ENCODE measurements at regions of chr17 and their contacts with region 1.

Region 1: GRCh38 chr17:69523244-69523861 is 108.9 kb downstream of the MAP2K6 start:
- DNase-seq: no peak
- H3K4me3 ChIP-seq: no peak overlapping the region
- H3K27ac ChIP-seq: no peak overlapping the region
- H3K4me1 ChIP-seq: peaks cover 0 to 8% (median 0%) of the 10 kb centered on the region in 4 donors
- H3K27me3 ChIP-seq: no peaks in the 10 kb centered on the region
- CTCF ChIP-seq: peak; percentile 55 to 81 (median 68)
- EP300 ChIP-seq: no peak
- POLR2A ChIP-seq: no peak

Region 2: GRCh38 chr17:69327060-69327831 is 196.1 kb before region 1 on chr17 and contains the start of gene ABCA5:
- in situ Hi-C with region 1: loop called in 2 of 4 experiments (anchors 10 to 25 kb)
- intact Hi-C with region 1: loop called (anchors 10 kb)
- DNase-seq: peak; percentile 93
- H3K4me3 ChIP-seq: peak within 1 kb of the TSS; percentile 63 to 81 (median 70)
- H3K27ac ChIP-seq: peak within 1 kb of the TSS; percentile 88 to 96 (median 91)
- H3K4me1 ChIP-seq: peaks cover 0 to 19% (median 5%) of the 10 kb centered on the region in 4 donors
- H3K27me3 ChIP-seq: no peaks in the 10 kb centered on the region
- CTCF ChIP-seq: no peak
- EP300 ChIP-seq: no peak
- POLR2A ChIP-seq: peak; percentile 66
- total RNA-seq, gene ABCA5: 17.3 to 173 (median 125) TPM

Region 3: DNA sequence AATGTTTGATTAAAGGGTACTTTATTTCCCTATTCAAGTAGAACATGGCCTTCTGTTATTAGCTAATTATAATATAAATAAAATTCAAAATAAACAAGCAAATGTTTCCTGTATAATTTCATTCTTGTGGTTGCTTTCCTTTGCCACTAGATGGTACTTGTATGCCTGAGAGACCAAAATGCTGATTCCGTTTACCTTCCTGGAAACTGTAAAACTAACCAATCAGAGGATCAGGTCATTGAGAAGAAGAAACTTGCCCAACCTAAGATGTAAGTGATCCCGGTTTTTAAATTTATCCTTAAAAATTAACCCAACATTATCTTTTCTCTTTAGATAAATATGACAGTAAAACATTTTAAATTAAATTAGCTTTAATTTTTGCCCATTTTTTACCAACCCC is 188.3 kb before region 1 on chr17:
- in situ Hi-C with region 1: loop called in 3 of 4 experiments (anchors 5 to 25 kb)
- intact Hi-C with region 1: no loop called
- DNase-seq: no peak
- H3K4me3 ChIP-seq: no peak overlapping the region
- H3K27ac ChIP-seq: no peak overlapping the region
- H3K4me1 ChIP-seq: peaks cover 0 to 6% (median 0%) of the 10 kb centered on the region in 4 donors
- H3K27me3 ChIP-seq: no peaks in the 10 kb centered on the region
- CTCF ChIP-seq: peak; percentile 46 to 68 (median 49)
- EP300 ChIP-seq: no peak
- POLR2A ChIP-seq: no peak

Region 4: GRCh38 chr17:69375229-69375628 is 148.1 kb before region 1 on chr17:
- in situ Hi-C with region 1: loop called in 1 of 4 experiments (anchors 25 kb)
- intact Hi-C with region 1: no loop called
- DNase-seq: no peak
- H3K4me3 ChIP-seq: no peak overlapping the region
- H3K27ac ChIP-seq: no peak overlapping the region
- H3K4me1 ChIP-seq: peaks cover 0 to 4% (median 0%) of the 10 kb centered on the region in 4 donors
- H3K27me3 ChIP-seq: no peaks in the 10 kb centered on the region
- CTCF ChIP-seq: no peak
- EP300 ChIP-seq: no peak
- POLR2A ChIP-seq: no peak

Region 5: DNA sequence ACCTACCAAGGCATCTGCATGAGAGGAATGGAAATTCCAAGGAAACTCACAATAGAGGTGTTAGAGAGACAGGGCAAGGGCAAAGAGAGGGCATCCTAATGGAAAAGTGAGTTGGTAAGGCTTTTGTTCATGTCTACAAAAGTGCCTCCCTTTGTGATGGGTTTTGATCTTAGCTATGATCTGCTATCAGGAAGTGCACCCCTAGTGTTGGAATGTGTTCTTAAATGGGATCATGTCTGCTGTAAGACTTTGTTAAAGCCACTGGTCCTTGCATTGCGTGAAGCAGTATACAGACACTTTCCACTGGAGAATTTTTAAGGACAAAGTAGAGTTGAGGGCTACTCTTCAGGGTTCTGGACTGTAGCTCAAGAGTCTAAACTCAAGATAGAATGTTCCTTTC is 16.9 kb before region 1 on chr17:
- in situ Hi-C with region 1: no loop called
- intact Hi-C with region 1: no loop called
- DNase-seq: no peak
- H3K4me3 ChIP-seq: no peak overlapping the region
- H3K27ac ChIP-seq: no peak overlapping the region
- H3K4me1 ChIP-seq: peaks cover 6 to 22% (median 11%) of the 10 kb centered on the region in 4 donors
- H3K27me3 ChIP-seq: no peaks in the 10 kb centered on the region
- CTCF ChIP-seq: peak in 4 of 5 experiments; percentile 17 to 27 (median 20)
- EP300 ChIP-seq: no peak
- POLR2A ChIP-seq: no peak